GM23248 (cell line): ENCODE measurements at regions of chr3 and their contacts with region 1.

Region 1: GRCh38 chr3:20511863-20512505 is 326.0 kb upstream of the SGO1 start:
- DNase-seq: peak; percentile 86
- H3K4me3 ChIP-seq: no peak overlapping the region
- H3K27ac ChIP-seq: no peak overlapping the region
- H3K4me1 ChIP-seq: no peaks in the 10 kb centered on the region
- H3K27me3 ChIP-seq: no peaks in the 10 kb centered on the region

Region 2: GRCh38 chr3:20930034-20930433 is 418.1 kb after region 1 on chr3:
- in situ Hi-C with region 1: loop called (anchors 10 kb)
- DNase-seq: peak; percentile 37
- H3K4me3 ChIP-seq: no peak overlapping the region
- H3K27ac ChIP-seq: no peak overlapping the region
- H3K4me1 ChIP-seq: no peaks in the 10 kb centered on the region
- H3K27me3 ChIP-seq: no peaks in the 10 kb centered on the region

Region 3: GRCh38 chr3:21484057-21484827 is 972.3 kb after region 1 on chr3:
- in situ Hi-C with region 1: loop called (anchors 5 kb)
- DNase-seq: peak; percentile 78
- H3K4me3 ChIP-seq: no peak overlapping the region
- H3K27ac ChIP-seq: no peak overlapping the region
- H3K4me1 ChIP-seq: no peaks in the 10 kb centered on the region
- H3K27me3 ChIP-seq: no peaks in the 10 kb centered on the region

Region 4: DNA sequence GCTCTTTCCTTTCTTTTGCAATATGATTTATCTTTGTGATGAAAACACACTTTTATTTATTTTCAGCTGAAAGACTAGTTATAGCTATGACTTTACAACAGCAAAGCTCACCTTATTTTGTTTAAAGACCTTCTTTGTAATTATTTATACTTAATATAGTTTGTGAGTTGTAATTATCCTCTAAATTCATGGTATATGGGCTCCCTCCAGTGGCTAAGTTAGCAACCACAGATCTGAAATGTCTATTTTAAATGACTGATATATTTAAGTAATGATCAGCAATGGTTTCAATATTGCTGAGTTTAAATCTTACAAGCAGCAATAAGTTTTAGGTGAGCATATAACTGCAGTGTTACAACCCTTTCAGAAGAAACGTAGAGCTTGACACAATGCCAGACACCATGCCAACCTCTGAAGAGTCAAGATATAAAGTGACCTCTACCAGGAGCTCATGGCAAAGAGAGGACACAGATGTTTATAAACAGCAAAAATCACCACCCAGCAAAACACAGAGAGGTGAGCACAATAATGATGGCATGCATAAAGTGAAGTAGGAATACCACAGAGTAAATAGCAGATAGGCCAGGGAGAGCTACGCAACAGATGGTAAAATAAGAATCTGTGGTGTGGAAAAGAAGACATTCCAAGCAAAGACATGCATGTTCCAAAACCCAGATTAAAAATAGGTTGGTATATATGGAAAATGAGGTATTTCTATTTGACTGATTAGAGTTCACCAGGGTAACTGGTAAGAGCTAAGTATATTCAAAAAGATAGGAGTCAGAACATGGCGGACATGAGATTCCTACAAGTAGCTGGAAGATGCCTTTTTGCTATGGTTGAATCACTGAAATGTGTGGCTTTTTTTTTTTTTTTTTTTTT is 1382.7 kb after region 1 on chr3:
- in situ Hi-C with region 1: loop called (anchors 10 kb)
- DNase-seq: peak; percentile 64
- H3K4me3 ChIP-seq: no peak overlapping the region
- H3K27ac ChIP-seq: no peak overlapping the region
- H3K4me1 ChIP-seq: 0 out of 2 replicates have a peak, but pooled peaks cover 3% of the 10 kb centered on the region
- H3K27me3 ChIP-seq: no peaks in the 10 kb centered on the region

Region 5: GRCh38 chr3:22117751-22118346 is 1605.9 kb after region 1 on chr3:
- in situ Hi-C with region 1: loop called (anchors 25 kb)
- DNase-seq: peak; percentile 61
- H3K4me3 ChIP-seq: no peak overlapping the region
- H3K27ac ChIP-seq: no peak overlapping the region
- H3K4me1 ChIP-seq: no peaks in the 10 kb centered on the region
- H3K27me3 ChIP-seq: no peaks in the 10 kb centered on the region